Dendritic cell treated with granulocyte-macrophage colony-stimulating factor and Interleukin-4, amounts not matched to agents 40 ng/mL and 50 ng/mL, for 4 days (primary cell): ENCODE measurements at regions of chr6 and their contacts with region 1.

Region 1: GRCh38 chr6:118283766-118284165 is 264.3 kb upstream of the PLN start:
- H3K4me3 Mint-ChIP-seq: no peak overlapping the region
- H3K27ac Mint-ChIP-seq: no peak overlapping the region
- H3K4me1 Mint-ChIP-seq: no peaks in the 10 kb centered on the region
- H3K27me3 Mint-ChIP-seq: peaks cover 1% of the 10 kb centered on the region

Region 2: DNA sequence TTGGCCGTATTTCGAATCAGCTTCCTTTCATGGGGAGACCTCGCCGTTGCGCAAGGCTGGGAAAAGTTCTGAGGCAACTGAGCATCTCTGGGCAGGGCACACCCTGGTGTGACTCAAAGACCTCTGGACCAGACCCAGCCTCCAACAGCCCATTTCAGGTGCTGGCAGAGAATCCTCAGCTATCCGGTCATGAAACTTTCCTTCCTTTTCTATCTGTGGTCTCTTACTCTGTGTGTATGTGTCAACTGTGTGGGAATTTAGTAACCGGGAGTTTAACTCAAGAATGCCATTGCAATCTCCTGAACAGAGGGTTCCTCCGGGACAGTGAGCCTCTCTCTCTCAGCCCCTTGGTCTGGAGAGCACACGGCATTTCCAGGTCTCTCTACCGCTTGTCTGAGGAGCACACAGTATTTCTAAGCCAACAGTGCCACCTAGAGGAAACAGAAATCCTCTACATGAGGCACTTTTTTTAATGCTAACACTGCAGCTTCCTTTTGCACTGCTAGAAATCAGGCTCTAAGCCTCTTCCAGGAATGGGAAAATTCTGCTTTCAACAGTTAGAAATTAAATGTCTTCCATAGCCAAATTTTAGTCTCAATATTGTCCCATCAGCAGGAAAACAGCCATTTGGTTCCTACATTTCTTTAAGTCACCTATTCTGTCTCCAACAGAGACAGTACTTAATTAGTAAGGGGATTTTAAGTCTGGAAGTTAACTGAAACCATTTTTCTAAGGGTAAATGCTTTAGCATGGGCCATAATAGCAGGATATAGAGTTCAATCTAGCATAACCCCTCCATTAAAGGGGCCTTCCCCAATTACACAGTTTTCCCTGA is 297.0 kb after region 1 on chr6:
- intact Hi-C with region 1: loop called (anchors 2 kb)
- H3K4me3 Mint-ChIP-seq: peak overlapping the region; percentile 26
- H3K27ac Mint-ChIP-seq: peak overlapping the region; percentile 72
- H3K4me1 Mint-ChIP-seq: peaks cover 41% of the 10 kb centered on the region
- H3K27me3 Mint-ChIP-seq: no peaks in the 10 kb centered on the region

Region 3: DNA sequence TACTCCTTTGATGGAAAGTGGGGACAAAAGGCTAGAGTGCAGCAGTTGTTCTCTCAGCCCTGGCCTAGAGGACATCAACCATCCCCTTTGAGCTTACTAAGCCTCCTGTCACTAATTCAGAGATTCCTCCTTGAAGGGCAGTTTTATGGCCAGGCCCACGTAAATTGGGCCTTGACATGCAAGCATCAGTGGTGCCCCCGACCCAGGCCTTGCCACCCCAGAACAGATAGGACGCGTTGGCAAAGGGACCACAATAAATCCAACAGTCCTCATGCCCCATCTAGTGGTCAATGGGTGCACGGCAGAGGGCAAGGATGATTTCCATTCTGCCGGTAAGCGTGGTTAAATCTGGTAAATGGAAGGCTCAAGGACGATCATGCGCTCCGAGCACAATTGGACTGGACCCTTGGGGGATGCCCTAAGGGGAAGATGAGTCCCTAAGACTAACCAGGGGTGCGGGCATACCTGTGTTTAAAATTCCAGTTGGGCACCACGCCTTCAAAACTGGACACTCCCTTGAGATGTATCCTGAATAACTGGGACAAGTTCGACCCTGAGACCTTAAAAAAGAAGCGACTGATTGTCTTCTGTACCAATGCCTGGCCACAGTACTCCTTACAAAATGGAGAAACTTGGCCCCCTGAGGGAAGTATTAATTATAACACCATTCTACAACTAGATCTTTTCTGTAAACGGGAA is 335.1 kb after region 1 on chr6:
- intact Hi-C with region 1: loop called (anchors 1 kb)
- H3K4me3 Mint-ChIP-seq: no peak overlapping the region
- H3K27ac Mint-ChIP-seq: no peak overlapping the region
- H3K4me1 Mint-ChIP-seq: peaks cover 17% of the 10 kb centered on the region
- H3K27me3 Mint-ChIP-seq: no peaks in the 10 kb centered on the region

Region 4: DNA sequence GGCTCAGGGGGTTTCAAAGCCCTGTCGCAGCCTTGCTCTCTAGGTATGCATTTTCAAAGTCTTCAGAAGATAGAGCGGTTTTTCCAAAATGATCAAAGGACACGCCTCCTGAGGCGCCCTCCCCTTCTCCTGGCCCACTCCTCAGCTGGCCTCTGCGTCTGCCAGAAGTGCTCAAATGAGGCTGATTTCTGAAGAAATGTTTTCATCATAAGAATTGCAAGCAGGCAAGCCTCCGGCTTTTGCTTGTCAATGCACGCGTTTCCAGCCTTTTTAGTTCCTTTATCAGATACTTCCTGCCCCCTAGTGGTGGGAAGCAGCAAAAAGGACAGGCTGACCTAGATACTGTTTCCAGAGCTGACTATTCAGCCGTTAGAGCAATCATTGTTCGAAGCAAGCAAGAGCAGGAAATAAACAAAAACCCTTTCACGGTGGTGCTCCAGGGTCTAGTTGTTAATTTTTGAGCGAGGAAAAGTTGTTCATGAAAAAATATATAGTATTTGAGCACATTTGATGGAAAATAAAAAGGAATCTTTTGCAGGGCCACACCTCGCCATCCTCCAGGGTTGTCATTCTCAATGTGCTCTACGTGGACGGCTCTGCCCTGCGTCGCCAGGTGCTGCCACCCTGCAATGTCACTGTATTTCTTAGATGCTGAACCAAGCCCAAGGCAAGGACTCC is 516.8 kb after region 1 on chr6:
- intact Hi-C with region 1: loop called (anchors 5 kb)
- H3K4me3 Mint-ChIP-seq: peak overlapping the region; percentile 17
- H3K27ac Mint-ChIP-seq: no peak overlapping the region
- H3K4me1 Mint-ChIP-seq: peaks cover 5% of the 10 kb centered on the region
- H3K27me3 Mint-ChIP-seq: no peaks in the 10 kb centered on the region